A549 (cell line): ENCODE measurements at regions of chr3 and their contacts with region 1.

Region 1: GRCh38 chr3:159828542-159828943 is 160.1 kb upstream of the IL12A start:
- DNase-seq: peak; percentile 38 to 54
- ATAC-seq: peak in 1 of 2 experiments; percentile 66; a peak in 3 of 6 replicates
- H3K4me3 ChIP-seq: no peak overlapping the region
- H3K27ac ChIP-seq: peak overlapping the region; percentile 78 to 85
- H3K4me1 ChIP-seq: peaks cover 50% of the 10 kb centered on the region
- CTCF ChIP-seq: peak; percentile 72
- EP300 ChIP-seq: no peak
- POLR2A ChIP-seq: no peak
- RAD21 ChIP-seq: peak; percentile 62 to 71

Region 2: GRCh38 chr3:159693226-159693625 is 135.3 kb before region 1 on chr3:
- CTCF ChIA-PET with region 1: no interaction called
- POLR2A ChIA-PET with region 1: no interaction called
- DNase-seq: no peak
- ATAC-seq: no peak
- H3K4me3 ChIP-seq: no peak overlapping the region
- H3K27ac ChIP-seq: no peak overlapping the region
- H3K4me1 ChIP-seq: no peaks in the 10 kb centered on the region
- CTCF ChIP-seq: no peak
- EP300 ChIP-seq: no peak
- POLR2A ChIP-seq: no peak
- RAD21 ChIP-seq: no peak

Region 3: GRCh38 chr3:159739886-159740453 is 88.6 kb before region 1 on chr3:
- CTCF ChIA-PET with region 1: no interaction called
- POLR2A ChIA-PET with region 1: no interaction called
- DNase-seq: no peak
- ATAC-seq: no peak; a peak in 1 of 6 replicates
- H3K4me3 ChIP-seq: no peak overlapping the region
- H3K27ac ChIP-seq: no peak overlapping the region
- H3K4me1 ChIP-seq: peaks cover 27% of the 10 kb centered on the region
- CTCF ChIP-seq: no peak
- EP300 ChIP-seq: no peak
- POLR2A ChIP-seq: no peak
- RAD21 ChIP-seq: no peak

Region 4: GRCh38 chr3:159787191-159787590 is 41.4 kb before region 1 on chr3:
- CTCF ChIA-PET with region 1: interaction called, 12 read pairs
- POLR2A ChIA-PET with region 1: no interaction called
- DNase-seq: peak; percentile 65 to 90
- ATAC-seq: peak; percentile 73 to 80
- H3K4me3 ChIP-seq: peak overlapping the region; percentile 13; the same call in 2 of the 3 replicates
- H3K27ac ChIP-seq: peak overlapping the region; percentile 75 to 84
- H3K4me1 ChIP-seq: peaks cover 99% of the 10 kb centered on the region
- CTCF ChIP-seq: no peak
- EP300 ChIP-seq: 0 out of 5 replicates have a peak, but pooled peaks of 1 of the 2 experiments have one; percentile 31
- POLR2A ChIP-seq: no peak
- RAD21 ChIP-seq: no peak

Region 5: DNA sequence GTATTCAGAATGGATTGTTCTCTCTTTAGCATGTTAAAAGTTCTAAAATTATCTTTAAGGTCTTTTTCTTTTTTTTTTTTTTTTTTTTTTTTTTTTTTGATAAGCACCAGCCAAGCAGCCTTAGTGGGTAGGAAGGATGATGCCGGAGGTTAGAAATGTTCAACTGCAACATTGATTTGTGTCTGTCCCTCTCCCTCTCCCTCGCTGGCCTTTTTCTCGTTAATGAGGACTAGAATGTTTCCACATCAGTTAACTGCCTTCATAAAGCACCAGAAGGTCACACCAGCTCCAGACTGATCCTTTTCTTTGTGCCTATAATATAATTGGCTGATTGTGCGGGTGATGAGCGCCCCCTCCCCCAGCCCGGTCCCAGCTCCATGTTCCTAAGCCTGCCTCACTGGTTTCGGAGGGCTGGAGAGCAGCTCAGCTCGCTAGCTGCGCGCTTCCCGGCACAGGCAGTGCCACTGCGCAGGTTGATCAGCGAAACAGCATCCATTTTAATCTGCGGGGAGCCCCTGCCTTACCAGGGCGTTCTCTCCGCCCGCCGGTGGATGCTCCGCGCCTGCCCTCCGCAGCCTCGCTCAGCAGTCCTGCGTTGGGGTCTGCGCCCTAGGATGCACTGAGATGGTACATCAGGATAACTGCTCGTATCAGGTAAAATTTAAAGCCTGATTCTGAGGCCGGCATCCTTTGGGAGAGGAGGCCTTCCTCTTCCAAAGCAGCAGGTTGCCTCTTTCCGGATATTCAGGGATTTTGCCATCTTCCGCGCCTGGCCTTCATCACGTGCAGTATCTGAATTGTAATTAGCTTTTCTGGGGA is 11.2 kb after region 1 on chr3:
- CTCF ChIA-PET with region 1: interaction called, 37 read pairs
- POLR2A ChIA-PET with region 1: interaction called, 4 read pairs
- DNase-seq: no peak
- ATAC-seq: no peak
- H3K4me3 ChIP-seq: no peak within 1 kb of the TSS
- H3K27ac ChIP-seq: peak within 1 kb of the TSS; percentile 43 to 64; a peak in 4 of 6 replicates
- H3K4me1 ChIP-seq: peaks cover 60% of the 10 kb centered on the region
- CTCF ChIP-seq: no peak
- EP300 ChIP-seq: no peak
- POLR2A ChIP-seq: no peak
- RAD21 ChIP-seq: no peak

Region 6: DNA sequence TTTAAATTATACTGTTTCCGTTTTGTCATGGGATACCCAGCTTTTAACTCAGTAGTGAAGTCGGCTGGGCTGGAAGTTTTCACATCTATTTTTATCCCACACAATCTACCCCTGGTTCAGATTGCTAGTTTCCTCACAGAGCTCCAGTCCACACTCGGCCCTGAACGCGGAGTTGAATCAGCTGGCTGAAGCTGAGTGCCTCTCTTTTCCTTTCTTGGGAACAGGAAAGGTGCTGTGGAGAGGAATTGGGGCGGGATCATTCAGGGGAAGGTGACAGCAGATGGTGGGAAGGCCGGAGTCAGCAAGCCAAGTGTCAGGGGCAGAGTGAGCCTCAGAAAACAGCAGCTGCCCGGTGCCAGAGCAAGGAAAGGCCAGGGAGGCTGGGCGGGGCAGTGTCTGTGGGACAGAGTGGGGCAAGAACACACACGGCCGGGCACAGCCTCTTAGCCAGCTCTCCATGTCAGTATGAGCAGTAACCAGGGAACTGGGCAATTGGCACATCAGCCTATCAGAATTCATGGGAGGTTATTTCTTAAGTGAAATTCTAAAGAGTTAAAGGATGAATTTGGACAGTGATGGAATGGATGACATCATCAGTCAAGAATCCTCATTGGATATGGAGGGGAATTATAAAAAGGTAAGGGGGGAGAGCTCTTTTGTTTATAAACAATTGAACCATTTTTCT is 24.4 kb after region 1 on chr3:
- CTCF ChIA-PET with region 1: interaction called, 18 read pairs
- POLR2A ChIA-PET with region 1: interaction called, 3 read pairs
- DNase-seq: peak in 1 of 2 experiments; percentile 10
- ATAC-seq: peak; percentile 49 to 60; a peak in 5 of 6 replicates
- H3K4me3 ChIP-seq: no peak overlapping the region
- H3K27ac ChIP-seq: peak overlapping the region; percentile 51 to 80; a peak in 5 of 6 replicates
- H3K4me1 ChIP-seq: peaks cover 48% of the 10 kb centered on the region
- CTCF ChIP-seq: no peak
- EP300 ChIP-seq: no peak
- POLR2A ChIP-seq: no peak
- RAD21 ChIP-seq: no peak

Region 7: DNA sequence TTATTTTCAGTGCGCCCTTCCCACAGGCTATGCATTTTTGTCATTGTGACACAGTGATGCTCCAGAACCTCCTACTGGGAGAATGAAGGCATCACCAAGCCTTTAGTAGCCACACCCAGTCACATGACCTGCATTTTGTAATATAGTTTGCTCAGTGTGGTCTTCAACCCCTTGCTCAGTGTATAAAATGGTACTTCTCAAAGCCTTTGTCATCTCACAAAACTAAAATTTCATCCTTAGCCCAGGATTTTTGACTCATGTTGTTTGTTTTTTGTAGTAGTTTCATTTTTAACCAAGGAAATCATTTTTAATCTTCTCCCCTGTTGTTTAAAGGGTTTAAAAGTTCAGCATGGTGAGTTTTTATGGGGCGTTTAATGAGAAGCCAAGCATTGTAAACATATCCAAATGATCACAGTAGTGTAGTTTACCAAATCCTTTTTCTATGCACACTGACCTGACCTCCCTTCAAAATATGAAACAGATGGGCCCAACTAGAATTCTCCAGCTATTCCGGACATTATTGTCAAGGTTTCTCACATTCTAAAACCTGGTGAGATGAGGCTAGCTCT is 36.6 kb after region 1 on chr3:
- CTCF ChIA-PET with region 1: interaction called, 20 read pairs
- POLR2A ChIA-PET with region 1: no interaction called
- DNase-seq: peak in 1 of 2 experiments; percentile 55
- ATAC-seq: peak; percentile 39 to 64; a peak in 4 of 6 replicates
- H3K4me3 ChIP-seq: no peak overlapping the region
- H3K27ac ChIP-seq: peak overlapping the region; percentile 47 to 53; a peak in 4 of 6 replicates
- H3K4me1 ChIP-seq: peaks cover 27% of the 10 kb centered on the region
- CTCF ChIP-seq: no peak
- EP300 ChIP-seq: no peak
- POLR2A ChIP-seq: no peak
- RAD21 ChIP-seq: no peak

Region 8: DNA sequence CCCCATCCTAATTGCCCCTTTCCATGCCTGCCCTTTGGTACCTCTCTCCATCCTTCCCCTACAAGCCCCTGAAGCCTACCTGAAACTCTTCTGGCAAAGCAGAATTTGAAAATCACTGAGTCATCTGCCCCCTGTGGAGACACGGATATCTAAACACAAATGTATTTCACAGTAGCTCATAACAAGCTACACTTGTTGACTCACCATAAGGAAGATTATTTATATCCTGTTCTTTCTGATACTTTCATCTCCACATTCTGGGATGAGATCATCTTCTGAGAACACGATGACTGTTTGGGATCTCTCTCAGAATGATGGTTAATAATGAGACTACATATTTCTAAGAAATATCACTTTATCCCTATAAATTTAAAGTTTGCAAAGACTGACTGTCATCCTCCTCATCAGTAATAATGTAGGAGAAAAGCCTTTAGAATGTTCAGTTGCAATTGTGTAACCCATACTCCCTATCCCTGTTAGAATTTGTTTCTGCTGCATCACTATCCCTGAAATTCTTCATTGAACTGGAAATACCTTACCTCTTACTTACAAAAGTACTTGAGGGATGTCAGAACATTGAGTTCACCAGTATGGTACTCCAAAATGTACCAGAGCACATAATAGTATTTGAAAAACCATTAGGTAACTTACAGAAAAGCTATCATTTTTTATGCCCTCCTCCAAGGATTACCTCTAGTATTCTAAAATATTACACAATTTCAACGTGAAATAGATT is 44.0 kb after region 1 on chr3:
- CTCF ChIA-PET with region 1: interaction called, 20 read pairs
- POLR2A ChIA-PET with region 1: no interaction called
- DNase-seq: peak; percentile 83 to 84
- ATAC-seq: peak; percentile 97 to 98
- H3K4me3 ChIP-seq: no peak overlapping the region
- H3K27ac ChIP-seq: peak overlapping the region; percentile 77 to 81
- H3K4me1 ChIP-seq: peaks cover 37% of the 10 kb centered on the region
- CTCF ChIP-seq: no peak
- EP300 ChIP-seq: peak; percentile 52 to 64; a peak in 2 of 5 replicates
- POLR2A ChIP-seq: no peak
- RAD21 ChIP-seq: no peak; a peak in 1 of 5 replicates

Region 9: DNA sequence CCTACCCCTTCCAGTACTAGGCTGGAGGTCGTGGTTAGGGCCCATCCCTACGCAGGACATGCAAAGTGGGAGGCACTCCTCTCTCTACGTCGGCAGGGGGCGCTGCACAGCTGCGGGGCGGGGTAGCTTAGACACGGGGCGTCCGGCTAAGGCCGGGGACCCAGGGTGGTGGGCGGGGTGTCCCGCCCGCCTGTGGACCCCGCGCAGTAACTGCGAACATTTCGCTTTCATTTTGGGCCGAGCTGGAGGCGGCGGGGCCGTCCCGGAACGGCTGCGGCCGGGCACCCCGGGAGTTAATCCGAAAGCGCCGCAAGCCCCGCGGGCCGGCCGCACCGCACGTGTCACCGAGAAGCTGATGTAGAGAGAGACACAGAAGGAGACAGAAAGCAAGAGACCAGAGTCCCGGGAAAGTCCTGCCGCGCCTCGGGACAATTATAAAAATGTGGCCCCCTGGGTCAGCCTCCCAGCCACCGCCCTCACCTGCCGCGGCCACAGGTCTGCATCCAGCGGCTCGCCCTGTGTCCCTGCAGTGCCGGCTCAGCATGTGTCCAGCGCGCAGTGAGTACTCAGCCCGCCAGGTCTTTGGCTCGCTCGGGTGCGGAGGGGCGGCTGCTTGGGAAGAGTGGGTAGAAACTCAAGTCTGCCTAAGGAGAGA is 160.2 kb after region 1 on chr3 and contains the start of gene IL12A:
- CTCF ChIA-PET with region 1: interaction called, 15 read pairs
- POLR2A ChIA-PET with region 1: no interaction called
- DNase-seq: peak; percentile 81 to 82
- ATAC-seq: peak; percentile 96 to 99
- H3K4me3 ChIP-seq: peak within 1 kb of the TSS; percentile 85
- H3K27ac ChIP-seq: peak within 1 kb of the TSS; percentile 84 to 90
- H3K4me1 ChIP-seq: 0 out of 3 replicates have a peak, but pooled peaks cover 8% of the 10 kb centered on the region
- CTCF ChIP-seq: peak; percentile 94
- EP300 ChIP-seq: no peak
- POLR2A ChIP-seq: no peak
- RAD21 ChIP-seq: peak; percentile 59 to 65
- polyA plus RNA-seq, gene IL12A: 0.66 and 1.7 TPM in 2 replicates